MCF 10A (cell line): ENCODE measurements at regions of chrX and their contacts with region 1.

Region 1: DNA sequence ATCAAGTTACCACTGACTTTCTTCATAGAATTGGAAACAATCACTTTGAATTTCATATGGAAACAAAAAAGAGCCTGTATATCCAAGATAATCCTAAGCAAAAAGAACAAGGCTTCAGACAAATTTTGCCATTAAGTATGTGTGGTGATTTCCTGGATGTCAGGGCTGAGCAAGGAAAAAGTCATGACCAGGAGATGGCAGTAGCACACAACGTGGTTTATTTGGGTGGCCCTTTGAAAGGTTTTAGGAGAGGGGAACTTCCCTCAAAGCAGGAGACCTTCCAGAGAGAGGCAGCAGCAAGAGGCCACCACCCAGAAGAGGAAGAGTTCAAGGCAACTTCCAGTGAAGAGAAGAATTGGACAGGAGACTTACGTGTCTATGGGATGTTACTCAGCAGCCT is 18.1 kb upstream of the ZXDB start:
- DNase-seq: peak; percentile 38
- H3K4me3 Mint-ChIP-seq: no peak overlapping the region
- H3K27ac Mint-ChIP-seq: no peak overlapping the region
- H3K4me1 Mint-ChIP-seq: no peaks in the 10 kb centered on the region
- H3K27me3 Mint-ChIP-seq: no peaks in the 10 kb centered on the region
- CTCF ChIP-seq: peak; percentile 45

Region 2: GRCh38 chrX:56802921-56803849 is 770.6 kb before region 1 on chrX:
- CTCF ChIA-PET with region 1: no interaction called
- POLR2A ChIA-PET with region 1: no interaction called
- intact Hi-C with region 1: no loop called
- DNase-seq: peak; percentile 77
- H3K4me3 Mint-ChIP-seq: peak overlapping the region; percentile 78
- H3K27ac Mint-ChIP-seq: no peak overlapping the region
- H3K4me1 Mint-ChIP-seq: peaks cover 13% of the 10 kb centered on the region
- H3K27me3 Mint-ChIP-seq: peaks cover 36% of the 10 kb centered on the region
- CTCF ChIP-seq: peak; percentile 70

Region 3: DNA sequence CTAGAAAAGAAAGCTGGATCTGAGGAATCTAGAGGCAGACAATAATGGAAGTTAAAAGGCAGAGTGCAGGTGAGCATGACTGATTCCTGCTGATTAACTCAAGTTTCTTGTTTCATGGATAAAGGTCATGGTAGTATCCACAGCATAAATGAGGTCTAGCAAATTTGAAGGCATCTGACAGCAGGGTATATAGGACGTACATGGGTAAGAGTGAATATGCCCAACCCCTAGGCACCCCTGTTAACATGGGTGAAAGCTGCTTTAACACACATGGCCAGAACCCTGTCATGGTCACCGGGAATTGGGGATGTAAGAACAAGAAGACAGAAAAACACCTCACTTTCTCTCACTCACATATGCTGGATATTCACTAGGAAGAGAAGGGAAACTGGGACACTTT is 81.3 kb after region 1 on chrX:
- CTCF ChIA-PET with region 1: no interaction called
- POLR2A ChIA-PET with region 1: no interaction called
- intact Hi-C with region 1: no loop called
- DNase-seq: no peak
- H3K4me3 Mint-ChIP-seq: no peak overlapping the region
- H3K27ac Mint-ChIP-seq: no peak overlapping the region
- H3K4me1 Mint-ChIP-seq: no peaks in the 10 kb centered on the region
- H3K27me3 Mint-ChIP-seq: no peaks in the 10 kb centered on the region
- CTCF ChIP-seq: no peak

Region 4: GRCh38 chrX:58025979-58026378 is 452.2 kb after region 1 on chrX:
- CTCF ChIA-PET with region 1: no interaction called
- POLR2A ChIA-PET with region 1: no interaction called
- intact Hi-C with region 1: loop called (anchors 5 kb)
- DNase-seq: peak; percentile 52
- H3K4me3 Mint-ChIP-seq: no peak overlapping the region
- H3K27ac Mint-ChIP-seq: no peak overlapping the region
- H3K4me1 Mint-ChIP-seq: no peaks in the 10 kb centered on the region
- H3K27me3 Mint-ChIP-seq: peaks cover 16% of the 10 kb centered on the region
- CTCF ChIP-seq: peak; percentile 53